ENCODE measurements at regions of chr15 and their contacts with region 1.

Region 1: GRCh38 chr15:64651573-64652260 is 123.7 kb downstream of the RBPMS2 start:
- DNase-seq: peak; percentile 79
- H3K4me3 Mint-ChIP-seq: peak overlapping the region; percentile 46
- H3K27ac Mint-ChIP-seq: peak overlapping the region; percentile 70
- H3K4me1 Mint-ChIP-seq: peaks cover 25% of the 10 kb centered on the region
- H3K27me3 Mint-ChIP-seq: no peaks in the 10 kb centered on the region

Region 2: DNA sequence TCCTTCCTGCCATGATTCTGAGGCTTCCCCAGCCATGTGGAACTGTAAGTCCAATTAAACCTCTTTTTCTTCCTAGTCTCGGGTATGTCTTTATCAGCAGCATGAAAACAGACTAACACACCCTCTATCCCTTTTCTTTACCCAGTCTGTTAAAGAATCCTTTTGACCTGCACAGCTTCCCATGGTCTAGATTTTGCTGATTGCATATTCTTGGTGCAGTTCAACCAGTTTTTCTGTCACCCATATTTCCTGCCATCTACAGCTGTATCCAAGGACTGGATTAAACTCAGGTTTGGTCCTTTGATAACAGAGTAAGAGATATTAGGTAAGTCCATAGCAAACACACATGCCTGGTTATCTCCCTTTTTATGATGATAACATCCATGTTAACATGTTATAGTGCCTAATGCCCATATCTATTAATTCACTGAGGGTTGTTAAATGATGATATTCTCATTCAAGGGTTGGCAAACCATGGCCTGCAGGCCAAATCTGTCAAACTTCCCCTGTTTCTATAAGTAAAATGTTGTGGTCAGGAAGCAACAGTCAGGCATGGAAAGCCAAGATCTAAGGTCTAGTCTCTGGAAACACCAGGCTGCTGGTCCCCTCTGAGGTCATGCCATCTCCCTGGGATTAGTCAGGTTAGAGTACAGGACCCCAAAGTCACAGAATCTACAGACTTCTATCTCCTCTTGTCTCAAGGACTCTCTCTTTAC is 803.1 kb before region 1 on chr15:
- intact Hi-C with region 1: no loop called
- DNase-seq: no peak
- H3K4me3 Mint-ChIP-seq: no peak overlapping the region
- H3K27ac Mint-ChIP-seq: peak overlapping the region; percentile 23
- H3K4me1 Mint-ChIP-seq: peaks cover 9% of the 10 kb centered on the region
- H3K27me3 Mint-ChIP-seq: no peaks in the 10 kb centered on the region

Region 3: GRCh38 chr15:64430000-64430735 is 221.5 kb before region 1 on chr15:
- intact Hi-C with region 1: loop called (anchors 5 kb)
- DNase-seq: peak; percentile 87
- H3K4me3 Mint-ChIP-seq: peak overlapping the region; percentile 79
- H3K27ac Mint-ChIP-seq: peak overlapping the region; percentile 95
- H3K4me1 Mint-ChIP-seq: peaks cover 40% of the 10 kb centered on the region
- H3K27me3 Mint-ChIP-seq: no peaks in the 10 kb centered on the region

Region 4: GRCh38 chr15:64478863-64479262 is 172.9 kb before region 1 on chr15:
- intact Hi-C with region 1: no loop called
- DNase-seq: no peak
- H3K4me3 Mint-ChIP-seq: no peak overlapping the region
- H3K27ac Mint-ChIP-seq: no peak overlapping the region
- H3K4me1 Mint-ChIP-seq: peaks cover 18% of the 10 kb centered on the region
- H3K27me3 Mint-ChIP-seq: no peaks in the 10 kb centered on the region

Region 5: GRCh38 chr15:64503197-64503596 is 148.5 kb before region 1 on chr15:
- intact Hi-C with region 1: no loop called
- DNase-seq: peak; percentile 66
- H3K4me3 Mint-ChIP-seq: peak overlapping the region; percentile 48
- H3K27ac Mint-ChIP-seq: peak overlapping the region; percentile 89
- H3K4me1 Mint-ChIP-seq: peaks cover 72% of the 10 kb centered on the region
- H3K27me3 Mint-ChIP-seq: no peaks in the 10 kb centered on the region

Region 6: DNA sequence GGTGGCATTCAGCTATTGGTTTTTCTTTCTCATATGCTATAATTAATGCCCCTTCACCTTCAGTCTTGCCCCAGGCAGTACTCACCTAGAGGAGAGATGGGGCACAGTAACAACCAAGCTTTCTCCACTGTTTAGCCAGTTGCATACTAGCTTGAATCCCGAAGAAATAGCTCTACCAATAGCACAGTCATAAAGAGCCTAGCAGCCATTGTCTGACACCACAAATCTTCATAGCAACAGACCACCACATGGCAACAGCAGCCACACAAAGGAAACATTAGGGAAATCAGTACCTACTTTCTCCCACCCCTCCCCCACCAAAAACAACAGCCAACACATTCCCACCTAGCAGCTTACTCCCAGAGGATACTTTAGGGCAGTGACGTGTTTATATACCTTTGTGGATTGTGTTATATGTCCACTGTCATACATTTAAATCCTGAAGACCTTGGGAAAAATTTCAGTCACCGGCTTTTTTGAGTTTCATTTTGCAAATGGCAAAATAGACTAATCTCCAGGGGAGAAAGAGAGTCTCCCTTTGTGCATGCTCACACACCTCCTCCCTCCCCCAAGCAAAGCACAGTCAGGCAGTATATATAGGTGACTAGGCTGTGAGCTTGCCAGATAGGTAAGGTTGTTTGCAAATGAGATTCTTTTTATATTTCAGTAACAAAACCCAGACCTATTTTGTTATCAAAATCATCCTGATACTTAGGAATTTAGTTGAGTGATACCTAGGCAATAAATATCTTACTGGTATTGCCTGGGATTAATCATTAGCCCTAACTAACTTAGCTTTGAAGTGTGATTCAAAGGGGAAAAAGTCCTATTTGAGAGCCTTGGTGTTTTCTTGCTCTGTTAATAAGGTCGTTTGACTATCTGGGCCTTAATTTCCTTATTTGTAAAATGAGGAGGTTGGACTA is 16.9 kb before region 1 on chr15:
- intact Hi-C with region 1: loop called (anchors 2 kb)
- DNase-seq: peak; percentile 80
- H3K4me3 Mint-ChIP-seq: peak overlapping the region; percentile 59
- H3K27ac Mint-ChIP-seq: peak overlapping the region; percentile 84
- H3K4me1 Mint-ChIP-seq: peaks cover 48% of the 10 kb centered on the region
- H3K27me3 Mint-ChIP-seq: no peaks in the 10 kb centered on the region

Region 7: DNA sequence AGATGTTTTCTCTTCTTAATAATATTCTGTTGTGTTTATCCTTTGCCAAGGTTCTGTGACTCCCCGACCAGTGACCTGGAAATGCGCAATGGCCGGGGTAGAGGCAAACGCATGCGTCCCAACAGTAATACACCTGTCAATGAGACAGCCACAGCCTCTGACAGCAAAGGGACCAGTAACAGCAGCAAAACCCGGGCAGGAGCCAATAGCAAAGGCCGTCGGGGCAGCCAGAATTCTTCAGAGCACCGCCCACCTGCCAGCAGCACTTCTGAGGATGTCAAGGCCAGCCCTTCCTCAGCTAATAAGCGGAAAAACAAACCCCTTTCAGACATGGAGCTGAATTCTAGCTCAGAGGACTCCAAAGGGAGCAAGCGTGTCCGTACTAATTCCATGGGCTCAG is 22.1 kb after region 1 on chr15:
- intact Hi-C with region 1: no loop called
- DNase-seq: no peak
- H3K4me3 Mint-ChIP-seq: no peak overlapping the region
- H3K27ac Mint-ChIP-seq: no peak overlapping the region
- H3K4me1 Mint-ChIP-seq: peaks cover 6% of the 10 kb centered on the region
- H3K27me3 Mint-ChIP-seq: no peaks in the 10 kb centered on the region